ENCODE measurements at regions of chr10 and their contacts with region 1.

Region 1: DNA sequence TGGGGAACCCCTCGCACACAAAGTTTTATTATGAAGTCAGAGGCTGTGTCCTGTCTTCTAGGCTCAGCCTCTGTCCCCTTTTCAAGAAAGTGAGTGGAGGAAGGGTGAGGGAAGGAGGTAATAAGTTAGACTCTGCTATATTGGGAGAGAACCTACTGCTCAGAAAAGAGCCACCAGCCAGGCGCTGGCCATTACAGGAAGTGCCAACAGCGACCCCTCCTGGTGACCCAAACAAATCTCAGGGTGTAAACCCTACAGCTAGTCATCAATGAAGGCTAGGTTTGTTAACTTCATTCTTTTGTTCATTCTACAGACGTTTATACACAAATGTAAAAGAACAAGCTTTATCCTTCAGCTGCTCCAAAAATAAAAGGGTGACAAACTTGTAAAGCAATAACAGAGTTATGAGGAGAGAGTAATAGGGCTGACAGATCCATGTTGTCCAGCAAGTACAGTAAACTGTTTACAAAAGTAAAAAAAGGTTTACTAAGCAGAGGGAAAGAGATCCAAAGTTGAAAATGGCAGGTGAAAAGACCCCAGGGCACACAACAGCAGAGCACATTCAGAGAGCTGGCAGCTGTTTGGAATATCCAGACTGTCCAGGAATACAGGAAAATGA is 82.7 kb downstream of the FAM204A start:
- DNase-seq: peak; percentile 73
- ATAC-seq: peak; percentile 95
- H3K4me3 Mint-ChIP-seq: no peak overlapping the region
- H3K27ac Mint-ChIP-seq: no peak overlapping the region
- H3K4me1 Mint-ChIP-seq: peaks cover 18% of the 10 kb centered on the region
- H3K27me3 Mint-ChIP-seq: peaks cover 98% of the 10 kb centered on the region
- CTCF ChIP-seq: peak; percentile 90

Region 2: GRCh38 chr10:117496616-117497028 is 762.8 kb before region 1 on chr10:
- CTCF ChIA-PET with region 1: interaction called, 24 read pairs
- POLR2A ChIA-PET with region 1: no interaction called
- DNase-seq: peak; percentile 82
- ATAC-seq: peak; percentile 88
- H3K4me3 Mint-ChIP-seq: no peak overlapping the region
- H3K27ac Mint-ChIP-seq: no peak overlapping the region
- H3K4me1 Mint-ChIP-seq: peaks cover 2% of the 10 kb centered on the region; the same call in 1 of the 2 replicates
- H3K27me3 Mint-ChIP-seq: peaks cover 35% of the 10 kb centered on the region
- CTCF ChIP-seq: peak; percentile 88

Region 3: GRCh38 chr10:117720931-117721835 is 538.2 kb before region 1 on chr10:
- CTCF ChIA-PET with region 1: interaction called, 10 read pairs
- POLR2A ChIA-PET with region 1: no interaction called
- DNase-seq: peak; percentile 58
- ATAC-seq: peak; percentile 87
- H3K4me3 Mint-ChIP-seq: no peak overlapping the region; the same call in 1 of the 2 replicates
- H3K27ac Mint-ChIP-seq: no peak overlapping the region
- H3K4me1 Mint-ChIP-seq: peaks cover 12% of the 10 kb centered on the region
- H3K27me3 Mint-ChIP-seq: peaks cover 6% of the 10 kb centered on the region; the same call in 1 of the 2 replicates
- CTCF ChIP-seq: no peak

Region 4: GRCh38 chr10:118115701-118116100 is 143.7 kb before region 1 on chr10:
- CTCF ChIA-PET with region 1: no interaction called
- POLR2A ChIA-PET with region 1: no interaction called
- DNase-seq: no peak
- ATAC-seq: no peak
- H3K4me3 Mint-ChIP-seq: no peak overlapping the region
- H3K27ac Mint-ChIP-seq: no peak overlapping the region
- H3K4me1 Mint-ChIP-seq: peaks cover 10% of the 10 kb centered on the region
- H3K27me3 Mint-ChIP-seq: no peaks in the 10 kb centered on the region
- CTCF ChIP-seq: no peak

Region 5: DNA sequence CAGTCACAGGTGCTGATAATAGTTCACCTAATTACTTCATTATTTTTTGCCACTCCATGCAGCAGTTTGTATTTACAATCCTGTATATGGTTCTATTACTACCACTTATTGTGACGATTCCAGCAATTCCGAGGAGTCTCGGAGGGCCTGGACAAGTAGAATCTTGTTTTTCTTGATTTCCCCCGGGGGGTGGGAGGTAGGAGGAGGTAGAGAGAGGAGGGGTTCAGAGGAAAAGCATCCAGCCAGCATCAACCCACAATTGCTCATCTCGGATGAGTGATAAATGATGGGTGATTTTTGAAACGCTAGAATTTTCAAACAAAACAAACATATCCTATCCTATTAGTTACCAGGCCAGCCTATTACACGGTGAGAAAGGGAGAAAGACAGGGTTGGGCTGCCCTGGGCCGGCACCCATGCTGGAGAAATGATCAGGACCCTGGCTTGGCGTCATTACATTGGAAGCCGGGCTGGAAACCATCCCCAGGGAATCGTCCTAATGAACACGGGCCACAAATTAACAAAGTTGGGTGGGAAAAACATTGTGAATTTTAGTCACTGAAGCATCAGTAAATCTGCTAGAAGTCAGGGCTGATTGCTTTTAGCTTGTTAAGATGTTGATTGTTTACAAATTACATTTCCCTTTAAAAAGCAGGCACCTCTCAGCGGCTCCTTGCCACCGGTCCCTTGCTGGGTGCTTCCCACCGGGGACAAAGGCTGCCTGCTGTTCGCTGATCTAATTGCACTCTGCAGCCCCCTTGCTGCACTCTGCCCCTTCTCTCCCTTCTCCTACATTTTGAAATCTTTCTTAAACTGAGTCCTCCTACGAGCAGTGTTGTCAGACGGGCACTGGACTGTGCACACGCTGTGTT is 12.8 kb before region 1 on chr10:
- CTCF ChIA-PET with region 1: interaction called, 14 read pairs
- POLR2A ChIA-PET with region 1: no interaction called
- DNase-seq: peak; percentile 17
- ATAC-seq: peak; percentile 72
- H3K4me3 Mint-ChIP-seq: peak overlapping the region; percentile 46
- H3K27ac Mint-ChIP-seq: no peak overlapping the region
- H3K4me1 Mint-ChIP-seq: peaks cover 24% of the 10 kb centered on the region
- H3K27me3 Mint-ChIP-seq: peaks cover 94% of the 10 kb centered on the region
- CTCF ChIP-seq: no peak

Region 6: DNA sequence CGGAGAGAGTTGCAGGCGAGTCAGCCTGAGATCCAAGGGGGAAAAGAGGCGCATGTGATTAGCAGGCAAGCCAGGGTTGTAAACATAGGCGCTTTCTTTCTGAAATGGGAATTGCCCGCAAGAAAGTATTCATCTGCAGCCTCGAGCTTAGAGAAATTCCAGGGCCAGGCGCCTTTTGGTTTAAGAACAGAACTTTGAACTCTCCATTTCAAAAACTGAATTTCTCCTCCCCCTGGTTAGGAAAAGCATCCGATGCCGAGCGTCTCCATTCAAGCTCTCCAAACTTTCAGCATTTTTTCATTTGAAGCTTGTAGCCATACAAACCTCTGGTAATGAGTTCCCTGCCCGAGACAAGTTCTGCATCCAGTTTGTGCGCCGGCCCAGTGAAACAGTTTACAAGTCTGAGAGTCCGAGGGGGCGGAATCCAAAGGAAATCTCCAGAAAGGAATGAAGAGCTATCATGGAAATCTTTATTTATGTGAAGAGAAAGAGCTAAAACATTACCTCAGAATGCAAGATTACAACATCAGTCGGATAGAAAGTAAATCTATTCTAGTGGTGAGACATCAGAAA is 12.8 kb after region 1 on chr10:
- CTCF ChIA-PET with region 1: interaction called, 16 read pairs
- POLR2A ChIA-PET with region 1: no interaction called
- DNase-seq: no peak
- ATAC-seq: peak; percentile 70
- H3K4me3 Mint-ChIP-seq: peak overlapping the region; percentile 51
- H3K27ac Mint-ChIP-seq: no peak overlapping the region
- H3K4me1 Mint-ChIP-seq: peaks cover 20% of the 10 kb centered on the region
- H3K27me3 Mint-ChIP-seq: peaks cover 48% of the 10 kb centered on the region
- CTCF ChIP-seq: no peak